ENCODE measurements at regions of chr5 and their contacts with region 1.

Region 1: DNA sequence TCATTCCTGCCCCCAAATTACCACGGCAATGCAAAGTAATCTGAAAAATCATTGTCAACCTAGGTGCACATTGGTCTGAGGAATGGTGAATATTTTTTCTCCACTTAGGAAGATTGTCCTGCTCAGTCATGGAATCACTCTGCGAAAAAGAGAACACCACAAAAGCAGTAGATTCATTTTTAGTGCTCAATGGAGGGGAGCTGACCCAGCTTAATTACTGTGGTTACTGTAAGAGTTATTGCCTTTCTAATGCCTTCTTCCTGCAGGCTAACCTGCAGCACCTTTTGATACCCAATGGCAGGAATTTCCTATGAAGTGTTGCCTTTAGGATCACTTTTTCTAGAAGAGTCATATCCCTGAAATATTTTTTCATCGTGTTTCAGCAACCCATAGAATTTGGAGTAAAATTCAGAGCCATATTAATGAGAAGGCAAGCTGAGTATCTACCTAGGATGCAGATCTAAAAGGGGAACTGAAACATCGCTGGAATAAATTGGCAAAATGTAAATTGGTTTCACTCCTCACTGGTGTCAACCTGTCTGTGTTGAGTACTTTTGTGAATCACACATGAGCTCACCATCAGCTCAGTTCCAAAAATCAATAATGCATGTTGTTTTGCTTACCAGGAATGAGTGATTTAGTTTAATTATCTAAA is 464.5 kb downstream of the CSNK1G3 start:
- DNase-seq: no peak
- ATAC-seq: no peak
- H3K4me3 ChIP-seq: no peak overlapping the region
- H3K27ac ChIP-seq: no peak overlapping the region
- H3K4me1 ChIP-seq: no peaks in the 10 kb centered on the region
- H3K27me3 ChIP-seq: no peaks in the 10 kb centered on the region; the same call in 1 of the 2 replicates
- CTCF ChIP-seq: no peak
- POLR2A ChIP-seq: no peak
- RAD21 ChIP-seq: no peak

Region 2: DNA sequence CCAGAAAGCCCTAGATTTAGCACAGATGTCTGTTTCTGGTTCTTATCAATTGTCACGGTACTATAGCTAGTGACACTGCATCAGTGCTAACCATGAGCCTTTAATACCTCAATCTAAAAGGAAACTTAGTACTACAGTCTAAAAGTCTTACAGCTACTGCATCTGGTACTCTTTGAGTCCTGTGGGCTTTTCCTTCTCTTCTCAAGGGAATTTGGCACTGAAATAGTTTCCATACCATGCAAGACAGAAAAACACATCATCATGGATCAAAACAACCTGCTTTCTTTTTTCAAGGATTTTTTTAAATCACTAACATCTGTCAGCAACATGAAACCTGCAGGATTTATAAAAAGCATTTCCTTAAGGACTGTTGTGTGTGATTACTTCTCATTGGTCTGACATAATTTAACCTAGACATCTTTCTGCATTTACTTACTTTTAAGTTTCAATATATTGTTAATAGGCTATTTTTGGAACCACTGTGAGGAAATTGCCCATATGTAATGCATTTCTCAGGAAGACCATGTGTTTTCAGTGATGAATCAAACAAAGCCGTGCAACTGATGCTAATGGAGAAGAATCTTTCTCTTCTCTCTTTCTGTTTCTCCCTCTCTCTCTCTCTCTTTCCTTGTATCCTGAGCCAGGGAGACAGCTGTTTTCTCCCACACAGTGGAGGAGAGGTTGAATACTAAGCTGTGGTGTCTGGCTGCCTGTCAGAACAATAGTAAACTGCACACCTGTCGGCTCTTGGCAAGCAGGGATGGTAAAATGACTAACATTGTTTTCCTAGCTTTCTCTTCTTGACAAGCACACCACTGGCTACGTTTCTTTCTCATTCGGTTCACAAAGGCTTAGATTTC is 191.1 kb before region 1 on chr5:
- CTCF ChIA-PET with region 1: no interaction called
- POLR2A ChIA-PET with region 1: no interaction called
- dilution Hi-C with region 1: no loop called
- in situ Hi-C with region 1: no loop called
- intact Hi-C with region 1: loop called (anchors 1 kb)
- DNase-seq: peak; percentile 64
- ATAC-seq: peak; percentile 63
- H3K4me3 ChIP-seq: no peak overlapping the region
- H3K27ac ChIP-seq: no peak overlapping the region; the same call in 1 of the 2 replicates
- H3K4me1 ChIP-seq: 0 out of 2 replicates have a peak, but pooled peaks cover 2% of the 10 kb centered on the region
- H3K27me3 ChIP-seq: no peaks in the 10 kb centered on the region; the same call in 1 of the 2 replicates
- CTCF ChIP-seq: no peak
- POLR2A ChIP-seq: no peak
- RAD21 ChIP-seq: no peak

Region 3: DNA sequence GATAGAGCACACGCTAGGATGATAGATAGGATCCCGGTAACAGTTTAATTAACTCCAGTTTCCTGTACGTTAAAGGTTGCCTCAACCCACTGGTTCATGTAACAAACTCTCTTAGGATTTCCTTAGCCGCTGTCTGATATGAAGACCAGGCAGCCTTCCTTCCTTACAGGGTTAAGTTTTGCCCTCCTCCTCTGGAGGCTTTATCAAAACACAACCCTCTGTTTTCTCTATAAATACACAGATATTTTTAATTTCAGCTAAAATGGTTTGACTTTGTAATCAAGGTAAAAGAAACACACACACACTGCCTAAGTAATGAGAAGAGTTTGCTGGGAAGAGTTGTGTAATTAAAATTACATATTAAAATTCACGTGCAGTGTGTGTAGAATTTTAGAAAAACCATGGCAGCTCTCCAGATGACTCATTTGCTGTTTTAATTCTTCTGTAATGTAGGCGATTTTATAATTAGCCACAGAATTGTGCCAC is 94.7 kb before region 1 on chr5:
- CTCF ChIA-PET with region 1: no interaction called
- POLR2A ChIA-PET with region 1: no interaction called
- dilution Hi-C with region 1: no loop called
- in situ Hi-C with region 1: no loop called
- intact Hi-C with region 1: no loop called
- DNase-seq: peak; percentile 34
- ATAC-seq: peak; percentile 62
- H3K4me3 ChIP-seq: no peak overlapping the region
- H3K27ac ChIP-seq: no peak overlapping the region
- H3K4me1 ChIP-seq: peaks cover 3% of the 10 kb centered on the region; the same call in 1 of the 2 replicates
- H3K27me3 ChIP-seq: no peaks in the 10 kb centered on the region
- CTCF ChIP-seq: no peak
- POLR2A ChIP-seq: no peak
- RAD21 ChIP-seq: no peak